Naive thymus-derived CD8-positive, alpha-beta T cell (primary cell): ENCODE measurements at regions of chr14 and their contacts with region 1.

Region 1: GRCh38 chr14:21071225-21072030 is 1.3 kb downstream of the ARHGEF40 start:
- DNase-seq: peak in 6 of 10 donors; percentile 13 to 46 (median 29)
- ATAC-seq: peak; percentile 35 to 46
- H3K4me3 Mint-ChIP-seq: peak overlapping the region; percentile 71 to 91 (median 84)
- H3K27ac Mint-ChIP-seq: peak overlapping the region in 7 of 10 donors; percentile 59 to 92 (median 85)
- H3K4me1 Mint-ChIP-seq: peaks cover 20 to 39% (median 36%) of the 10 kb centered on the region in 4 donors
- H3K27me3 Mint-ChIP-seq: peaks cover 33 to 72% (median 50%) of the 10 kb centered on the region in 5 donors

Region 2: DNA sequence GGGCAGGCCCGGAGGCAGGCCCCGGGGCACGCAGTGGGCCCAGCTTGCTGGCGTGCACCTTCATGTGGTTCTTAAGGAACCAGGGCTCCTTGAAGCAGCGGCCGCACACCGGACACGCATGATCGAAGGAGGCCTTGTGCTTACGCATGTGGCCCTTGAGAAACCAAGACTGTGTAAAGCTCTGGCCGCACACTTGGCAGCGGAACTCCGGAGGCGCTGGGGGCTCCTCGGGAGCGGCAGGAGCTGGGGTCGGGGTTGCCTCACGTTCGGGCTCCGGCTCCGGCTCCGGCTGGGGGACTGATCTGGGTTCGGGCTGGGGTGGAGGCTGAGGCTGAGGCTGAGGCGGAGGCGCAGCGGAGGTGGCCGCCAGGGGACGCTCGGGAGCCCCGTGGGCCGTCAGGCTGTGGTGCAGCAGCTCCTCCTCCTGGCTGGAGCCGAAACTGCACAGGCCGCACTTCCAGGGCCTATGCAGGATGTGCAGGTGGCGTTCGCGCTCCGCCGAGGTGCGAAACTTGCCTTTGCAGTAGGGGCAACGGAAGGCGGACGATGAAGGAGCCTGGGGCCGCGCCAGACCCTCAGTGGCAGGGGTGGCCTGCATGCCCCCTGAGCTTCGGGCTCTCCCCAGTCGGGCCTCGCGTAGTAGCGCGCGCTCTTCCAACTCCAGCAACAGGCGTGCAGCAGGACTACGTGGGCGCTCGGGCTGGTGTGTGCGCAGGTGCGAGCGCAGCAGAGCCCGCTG is 21.0 kb after region 1 on chr14:
- POLR2A ChIA-PET with region 1: interaction called, 16 read pairs
- DNase-seq: peak; percentile 81 to 96 (median 92)
- ATAC-seq: peak; percentile 61 to 69
- H3K4me3 Mint-ChIP-seq: peak overlapping the region in 1 of 10 donors; percentile 14
- H3K27ac Mint-ChIP-seq: peak overlapping the region in 9 of 10 donors; percentile 25 to 92 (median 89)
- H3K4me1 Mint-ChIP-seq: peaks cover 25 to 40% (median 28%) of the 10 kb centered on the region in 4 donors
- H3K27me3 Mint-ChIP-seq: peaks cover 0 to 2% (median 0%) of the 10 kb centered on the region in 5 donors

Region 3: DNA sequence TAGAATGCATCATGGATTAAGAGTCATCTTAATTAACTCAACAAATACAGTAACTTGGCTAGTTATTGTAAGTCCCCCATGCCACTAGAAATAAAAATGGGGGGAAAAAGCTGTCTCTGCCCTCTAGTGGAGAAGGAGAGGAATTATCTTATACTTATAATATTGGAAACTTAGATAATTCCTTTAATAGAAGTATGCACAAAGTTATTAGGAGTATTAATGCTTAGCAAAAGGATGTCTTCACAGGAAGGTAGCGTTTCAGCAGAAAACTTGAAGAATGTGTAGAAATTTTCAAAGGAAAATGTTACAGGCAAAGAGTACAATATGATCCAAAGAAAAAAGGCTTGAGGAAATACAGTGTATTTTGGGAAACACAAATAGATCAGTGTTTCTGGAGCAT is 64.6 kb after region 1 on chr14:
- POLR2A ChIA-PET with region 1: no interaction called
- DNase-seq: peak in 3 of 10 donors; percentile 13 to 26 (median 21)
- ATAC-seq: no peak
- H3K4me3 Mint-ChIP-seq: no peak overlapping the region
- H3K27ac Mint-ChIP-seq: no peak overlapping the region
- H3K4me1 Mint-ChIP-seq: no peaks in the 10 kb centered on the region
- H3K27me3 Mint-ChIP-seq: peaks cover 0 to 2% (median 0%) of the 10 kb centered on the region in 5 donors